ENCODE measurements at regions of chr4 and their contacts with region 1.

Region 1: GRCh38 chr4:154516318-154517029 is 24.9 kb upstream of the DCHS2 start:
- DNase-seq: no peak

Region 2: DNA sequence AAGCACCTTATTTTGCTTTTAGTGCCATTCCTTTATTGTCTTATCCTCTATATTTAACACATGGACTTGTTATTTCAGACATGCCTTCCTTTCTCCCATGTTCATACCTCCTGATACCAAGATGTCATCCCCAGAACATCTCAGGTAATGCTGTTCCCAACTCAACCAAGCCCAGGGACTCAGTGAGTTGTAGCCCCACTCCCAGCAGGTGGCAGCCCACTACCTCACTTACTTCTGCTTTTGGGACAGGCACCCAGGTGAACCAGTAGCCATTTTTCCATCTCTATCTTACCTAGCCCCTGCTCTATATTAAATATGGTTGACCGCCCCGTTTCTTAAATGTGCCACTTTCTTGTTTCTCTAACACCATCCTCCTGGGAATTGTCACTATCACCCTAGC is 223.9 kb before region 1 on chr4:
- CTCF ChIA-PET with region 1: interaction called, 15 read pairs
- POLR2A ChIA-PET with region 1: no interaction called
- DNase-seq: no peak

Region 3: GRCh38 chr4:154491341-154492271 is 24.9 kb before region 1 on chr4 and contains the start of gene DCHS2:
- CTCF ChIA-PET with region 1: no interaction called
- POLR2A ChIA-PET with region 1: no interaction called
- DNase-seq: peak; percentile 45

Region 4: GRCh38 chr4:154506253-154506652 is 10.2 kb before region 1 on chr4:
- CTCF ChIA-PET with region 1: interaction called, 11 read pairs
- POLR2A ChIA-PET with region 1: no interaction called
- DNase-seq: peak; percentile 21

Region 5: GRCh38 chr4:154618708-154619315 is 102.3 kb after region 1 on chr4:
- CTCF ChIA-PET with region 1: interaction called, 11 read pairs
- POLR2A ChIA-PET with region 1: no interaction called
- DNase-seq: peak; percentile 61

Region 6: GRCh38 chr4:154869301-154869700 is 352.8 kb after region 1 on chr4:
- CTCF ChIA-PET with region 1: no interaction called
- POLR2A ChIA-PET with region 1: no interaction called
- DNase-seq: no peak

Measured in HEK293T (cell line).